Posterior cingulate gyrus (tissue), 11 donors: ENCODE measurements at regions of chr4 and their contacts with region 1.

Region 1: DNA sequence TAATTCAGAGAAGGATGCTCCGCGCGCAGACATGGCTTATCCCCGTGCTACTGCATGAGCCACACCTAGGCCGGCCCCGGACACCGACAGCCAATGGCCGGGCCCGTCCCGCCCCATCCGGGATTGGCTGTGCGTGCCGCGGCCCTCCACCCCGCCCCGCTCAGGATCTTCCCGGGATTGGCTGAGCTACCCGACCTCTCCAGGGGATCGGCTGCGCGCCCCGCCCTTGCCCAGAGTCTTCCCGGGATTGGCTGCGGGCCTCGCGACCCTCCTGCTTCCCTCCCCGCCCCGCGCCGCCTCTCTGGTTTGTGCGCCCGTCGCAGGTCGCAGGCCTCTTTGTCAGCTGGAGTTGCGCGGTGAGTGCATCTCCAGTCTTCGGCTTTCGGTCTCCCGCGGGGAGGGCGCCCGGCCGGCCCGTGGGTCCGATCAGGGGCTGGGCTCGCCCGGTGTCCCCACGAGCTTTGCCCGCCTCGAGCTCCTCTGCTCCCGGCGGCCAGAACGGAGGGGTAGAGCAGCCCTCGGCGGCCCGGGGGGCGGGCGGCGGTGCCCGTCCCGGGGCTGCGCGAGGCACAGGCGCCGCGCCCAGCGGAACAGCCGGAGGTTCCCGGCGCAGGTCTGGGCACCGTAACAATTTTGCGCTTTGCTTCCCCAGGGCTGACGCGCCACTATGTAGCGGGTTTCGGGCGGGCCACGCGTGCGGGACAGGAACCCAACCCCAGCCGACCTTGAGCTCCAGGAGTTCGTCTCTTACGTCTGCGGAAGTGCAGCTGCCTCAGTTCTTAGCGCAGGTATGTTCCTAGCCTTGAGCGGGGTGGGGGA is 38.8 kb downstream of the ERVMER34-1 start:
- DNase-seq: peak; percentile 97 to 100 (median 99)

Region 2: DNA sequence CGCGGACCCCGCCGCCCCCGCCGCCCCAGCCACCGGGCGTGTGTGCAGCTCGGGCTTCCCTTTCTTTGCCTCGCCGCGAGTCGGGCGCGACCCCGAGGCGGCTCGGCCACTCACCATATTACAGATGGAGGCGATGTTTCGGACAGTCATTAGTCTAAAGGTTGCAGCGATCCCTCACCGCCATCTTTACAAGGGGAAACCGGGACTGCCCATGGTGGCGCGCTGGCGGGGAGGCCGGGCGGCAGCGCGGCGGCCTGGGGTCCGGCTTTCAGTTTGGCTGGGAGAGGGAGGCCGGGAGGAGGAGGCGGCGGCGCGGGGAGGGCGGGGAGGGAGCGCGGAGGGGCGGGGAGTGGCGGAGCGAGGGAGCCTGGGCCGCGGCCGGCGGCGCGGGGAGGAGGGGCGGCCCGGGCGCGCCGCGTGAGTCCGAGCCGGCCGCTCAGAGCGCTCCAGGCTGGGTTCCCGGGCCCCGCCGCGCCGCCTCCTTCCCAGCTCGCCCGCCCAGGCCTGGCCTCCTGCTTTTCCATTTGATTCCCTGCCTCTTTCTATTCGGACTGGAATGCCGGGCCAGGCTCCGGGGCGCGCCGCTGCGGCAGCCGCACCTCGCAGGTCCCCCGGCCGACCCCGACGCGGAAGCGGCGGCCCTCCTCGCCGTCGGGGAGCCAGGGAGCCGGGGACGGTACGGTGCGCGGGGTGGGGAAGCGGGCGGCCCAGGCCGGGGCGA is 53.2 kb before region 1 on chr4 and contains the start of gene USP46:
- intact Hi-C with region 1: loop called (anchors 1 kb)
- DNase-seq: peak; percentile 50 to 94 (median 66)